HEK293 (cell line): ENCODE measurements at regions of chr10 and their contacts with region 1.

Region 1: GRCh38 chr10:72692057-72692910 is at the start of gene MCU:
- H3K4me3 ChIP-seq: peak within 1 kb of the TSS; percentile 82
- H3K27ac ChIP-seq: peak within 1 kb of the TSS; percentile 83
- H3K4me1 ChIP-seq: peaks cover 20% of the 10 kb centered on the region; the same call in 1 of the 2 replicates
- CTCF ChIP-seq: no peak

Region 2: DNA sequence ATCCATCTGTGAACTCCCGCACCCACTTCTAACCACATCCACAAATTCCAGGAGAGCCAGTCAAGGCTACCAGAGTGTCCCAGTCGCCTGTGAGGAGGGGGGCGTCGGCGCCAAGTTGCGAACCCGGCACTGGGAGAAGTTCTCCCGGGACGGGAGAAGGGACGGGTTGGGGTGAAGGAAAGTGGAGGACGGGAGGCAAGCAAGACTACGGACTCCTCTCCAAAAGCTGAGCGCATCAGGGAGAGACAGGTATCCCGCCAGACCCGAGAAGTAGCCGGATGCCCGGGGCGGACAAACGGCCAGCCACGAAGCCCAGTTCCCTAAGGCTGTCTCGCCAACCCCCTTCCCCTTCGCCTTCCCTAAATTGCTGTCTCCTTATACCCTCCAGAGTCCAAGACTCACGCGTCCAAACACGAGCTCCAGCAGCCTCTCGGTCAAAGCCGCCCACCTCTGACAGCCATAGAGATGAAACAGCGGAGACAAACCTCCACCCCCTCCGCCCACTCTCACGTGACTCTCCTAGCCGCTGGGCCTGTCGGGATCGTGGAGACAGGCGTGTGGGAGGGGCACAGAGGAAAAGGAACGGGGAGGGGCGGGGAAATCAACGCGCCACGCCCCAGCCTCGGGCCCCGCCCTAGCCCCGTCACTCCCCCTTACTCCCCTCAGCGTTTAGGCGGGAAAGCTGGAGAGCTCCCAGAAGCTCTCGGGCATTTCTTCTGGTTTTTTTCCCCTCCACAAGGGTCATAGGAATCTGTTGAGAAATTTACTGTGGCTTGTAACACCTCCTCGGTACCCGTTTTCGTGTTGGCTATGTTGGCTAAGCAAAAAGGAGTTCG is 66.5 kb before region 1 on chr10 and contains the start of gene MICU1:
- CTCF ChIA-PET with region 1: interaction called, 4 read pairs
- POLR2A ChIA-PET with region 1: interaction called, 22 read pairs
- H3K4me3 ChIP-seq: peak within 1 kb of the TSS; percentile 70
- H3K27ac ChIP-seq: peak within 1 kb of the TSS; percentile 77
- H3K4me1 ChIP-seq: peaks cover 5% of the 10 kb centered on the region; the same call in 1 of the 2 replicates
- CTCF ChIP-seq: peak; percentile 19; the same call in 1 of the 2 replicates

Region 3: DNA sequence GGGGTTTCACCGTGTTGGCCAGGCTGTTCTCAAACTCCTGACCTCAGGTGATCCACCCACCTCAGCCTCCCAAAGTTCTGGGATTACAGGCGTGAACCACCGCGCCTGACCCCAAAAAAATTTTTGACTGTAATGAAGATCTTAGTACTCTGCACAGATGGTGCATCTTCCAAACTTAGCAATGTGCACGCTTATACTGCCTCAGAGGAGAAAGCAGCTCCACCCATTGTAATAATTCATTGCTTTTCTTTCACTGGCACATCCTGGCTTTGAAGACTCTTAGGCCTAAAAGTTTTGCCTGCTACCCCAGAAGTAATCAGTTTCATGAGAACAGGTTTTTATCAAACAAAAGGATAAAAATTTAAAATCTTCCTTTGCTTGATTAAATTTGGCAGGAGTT is 149.2 kb after region 1 on chr10:
- CTCF ChIA-PET with region 1: no interaction called
- POLR2A ChIA-PET with region 1: no interaction called
- H3K4me3 ChIP-seq: no peak overlapping the region
- H3K27ac ChIP-seq: no peak overlapping the region
- H3K4me1 ChIP-seq: no peaks in the 10 kb centered on the region
- CTCF ChIP-seq: no peak

Region 4: GRCh38 chr10:72954596-72955554 is 262.6 kb after region 1 on chr10 and contains the start of gene PLA2G12B:
- CTCF ChIA-PET with region 1: no interaction called
- POLR2A ChIA-PET with region 1: no interaction called
- H3K4me3 ChIP-seq: no peak within 1 kb of the TSS
- H3K27ac ChIP-seq: no peak within 1 kb of the TSS
- H3K4me1 ChIP-seq: peaks cover 2% of the 10 kb centered on the region; the same call in 1 of the 2 replicates
- CTCF ChIP-seq: no peak